ENCODE measurements at regions of chr2 and their contacts with region 1.

Region 1: DNA sequence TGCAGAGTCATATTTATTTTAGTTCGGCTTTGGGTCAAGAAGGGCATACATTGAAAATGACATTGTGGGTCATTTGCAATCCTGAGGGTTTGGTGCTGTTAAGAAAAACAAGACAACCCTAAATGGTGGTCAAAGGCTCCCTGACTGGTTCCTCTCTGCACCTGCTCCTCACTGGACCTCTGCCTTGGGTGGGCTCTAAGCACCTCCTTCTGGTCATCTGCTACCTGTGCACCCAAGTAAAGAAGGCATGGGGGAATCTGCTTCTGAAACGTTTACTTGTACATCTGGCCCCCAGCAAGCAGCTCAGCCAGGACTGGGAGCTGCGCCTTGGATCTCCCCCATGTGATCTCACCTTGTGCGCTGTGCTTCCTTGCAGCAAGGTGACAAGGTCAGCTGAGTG is 55.2 kb upstream of the MAL start:
- DNase-seq: no peak
- H3K4me3 ChIP-seq: no peak overlapping the region
- H3K27ac ChIP-seq: no peak overlapping the region
- H3K4me1 ChIP-seq: no peaks in the 10 kb centered on the region
- H3K27me3 ChIP-seq: no peaks in the 10 kb centered on the region
- CTCF ChIP-seq: no peak
- EP300 ChIP-seq: no peak
- POLR2A ChIP-seq: no peak

Region 2: GRCh38 chr2:94997981-94998930 is 27.9 kb after region 1 on chr2:
- intact Hi-C with region 1: loop called in 1 of 4 experiments (anchors 2 kb)
- DNase-seq: no peak
- H3K4me3 ChIP-seq: no peak overlapping the region
- H3K27ac ChIP-seq: no peak overlapping the region
- H3K4me1 ChIP-seq: no peaks in the 10 kb centered on the region
- H3K27me3 ChIP-seq: no peaks in the 10 kb centered on the region
- CTCF ChIP-seq: no peak
- EP300 ChIP-seq: no peak
- POLR2A ChIP-seq: no peak

Region 3: GRCh38 chr2:95082477-95082876 is 112.1 kb after region 1 on chr2:
- intact Hi-C with region 1: no loop called
- DNase-seq: no peak
- H3K4me3 ChIP-seq: no peak overlapping the region
- H3K27ac ChIP-seq: no peak overlapping the region
- H3K4me1 ChIP-seq: no peaks in the 10 kb centered on the region
- H3K27me3 ChIP-seq: no peaks in the 10 kb centered on the region
- CTCF ChIP-seq: no peak
- EP300 ChIP-seq: no peak
- POLR2A ChIP-seq: no peak